ENCODE measurements at regions of chr11 and their contacts with region 1.

Region 1: DNA sequence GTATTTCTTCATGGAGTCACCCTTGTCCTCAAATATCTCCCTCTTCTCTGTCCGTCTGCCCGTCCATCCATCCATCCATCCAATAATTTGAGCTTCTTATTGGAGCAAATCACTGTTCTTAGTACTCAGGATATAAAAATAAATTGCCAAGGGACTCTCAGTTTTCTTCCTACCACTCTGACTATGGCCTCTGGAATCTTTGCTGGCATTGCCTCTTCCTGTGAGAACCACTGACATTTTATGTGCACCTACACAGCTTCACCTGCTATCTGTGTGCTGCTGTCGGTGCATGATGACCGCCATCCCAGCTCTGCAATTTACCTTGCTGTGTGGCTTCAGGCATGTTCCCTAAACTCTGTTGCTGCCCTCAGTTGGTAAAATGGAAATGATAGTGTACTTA is 37.9 kb downstream of the TEAD1 start:
- DNase-seq: no peak
- H3K4me3 ChIP-seq: no peak overlapping the region
- CTCF ChIP-seq: no peak

Region 2: GRCh38 chr11:12669930-12670329 is 42.2 kb before region 1 on chr11:
- in situ Hi-C with region 1: no loop called
- DNase-seq: no peak
- H3K4me3 ChIP-seq: no peak overlapping the region
- CTCF ChIP-seq: no peak

Region 3: GRCh38 chr11:12746593-12747097 is 34.5 kb after region 1 on chr11:
- in situ Hi-C with region 1: no loop called
- DNase-seq: peak; percentile 83
- H3K4me3 ChIP-seq: no peak overlapping the region
- CTCF ChIP-seq: peak; percentile 13

Region 4: GRCh38 chr11:12769834-12770345 is 57.8 kb after region 1 on chr11:
- in situ Hi-C with region 1: loop called (anchors 5 kb)
- DNase-seq: peak; percentile 71
- H3K4me3 ChIP-seq: no peak overlapping the region
- CTCF ChIP-seq: no peak